ENCODE measurements at regions of chr17 and their contacts with region 1.

Region 1: DNA sequence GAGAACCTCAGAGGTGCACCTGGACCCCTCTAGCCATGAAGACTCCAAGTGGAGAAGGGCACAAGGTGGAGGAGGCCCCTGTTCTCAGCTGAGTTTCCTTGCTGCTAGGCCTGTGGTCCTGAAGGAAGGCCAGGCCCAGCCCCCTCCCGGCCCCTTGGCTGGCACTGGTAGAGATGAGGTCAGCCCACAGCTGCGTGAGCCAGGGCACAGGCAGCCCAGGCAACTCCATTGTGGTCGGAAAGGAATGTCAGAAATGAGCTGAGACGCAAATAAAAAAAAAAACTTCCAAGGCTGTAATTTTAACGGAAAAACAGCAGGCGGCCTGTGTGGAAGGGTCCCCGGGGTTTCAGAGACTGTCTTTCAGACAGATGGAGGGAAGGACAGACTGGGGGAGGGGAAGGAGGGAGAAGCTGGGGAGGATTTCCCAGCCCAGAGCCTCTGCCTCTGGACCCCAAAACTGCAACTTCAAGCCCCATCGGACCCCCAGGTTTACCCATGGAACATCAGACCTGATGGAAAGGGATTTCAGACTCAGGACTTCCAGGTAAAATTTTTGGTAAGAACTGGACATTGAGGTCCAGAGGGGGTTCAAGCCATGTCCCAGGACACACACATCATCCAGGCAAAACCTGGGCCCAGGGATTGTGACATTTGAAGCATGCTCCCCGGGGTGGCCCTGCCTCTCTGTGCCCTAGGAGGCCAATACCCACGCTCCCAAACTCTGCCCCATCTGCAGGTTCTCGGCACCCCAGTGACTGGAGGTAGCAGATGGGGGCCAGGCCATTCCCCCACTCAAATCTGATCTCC is 25.7 kb upstream of the MRPS23 start:
- DNase-seq: peak; percentile 94
- H3K4me3 ChIP-seq: peak overlapping the region; percentile 11
- H3K27ac ChIP-seq: peak overlapping the region; percentile 95
- H3K4me1 ChIP-seq: peaks cover 70% of the 10 kb centered on the region
- H3K27me3 ChIP-seq: no peaks in the 10 kb centered on the region
- CTCF ChIP-seq: peak; percentile 44

Region 2: GRCh38 chr17:57892146-57892828 is 16.8 kb after region 1 on chr17:
- CTCF ChIA-PET with region 1: interaction called, 9 read pairs
- POLR2A ChIA-PET with region 1: no interaction called
- intact Hi-C with region 1: loop called (anchors 1 kb)
- DNase-seq: peak; percentile 90
- H3K4me3 ChIP-seq: no peak overlapping the region
- H3K27ac ChIP-seq: no peak overlapping the region
- H3K4me1 ChIP-seq: peaks cover 32% of the 10 kb centered on the region
- H3K27me3 ChIP-seq: no peaks in the 10 kb centered on the region
- CTCF ChIP-seq: peak; percentile 98

Region 3: DNA sequence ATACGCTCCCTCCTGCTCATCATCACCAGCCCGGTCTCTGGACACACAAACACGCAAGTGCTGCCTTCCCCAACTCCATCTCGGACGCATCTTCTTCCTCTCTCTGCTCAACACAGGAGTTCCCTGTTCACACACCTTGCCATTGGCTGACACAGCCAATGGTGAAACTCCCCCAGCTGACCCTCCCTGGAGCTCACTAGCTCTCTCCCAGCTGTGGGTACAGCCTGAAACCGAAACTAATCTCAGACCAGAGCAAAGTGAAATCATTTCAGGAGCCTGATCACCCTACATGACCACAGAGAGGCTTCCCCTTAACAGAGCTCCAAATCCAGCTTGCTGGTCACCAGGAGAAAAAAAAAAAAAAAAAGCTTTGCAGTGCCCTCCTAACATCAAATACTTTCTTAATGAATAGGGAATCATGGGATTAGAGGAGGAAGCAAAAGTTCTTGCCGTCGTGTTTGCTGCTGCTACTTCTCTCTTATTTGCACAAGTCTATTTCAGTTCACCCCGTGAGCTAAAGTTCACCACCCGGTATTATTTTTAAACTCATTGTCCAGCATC is 71.4 kb after region 1 on chr17:
- CTCF ChIA-PET with region 1: interaction called, 10 read pairs
- POLR2A ChIA-PET with region 1: no interaction called
- intact Hi-C with region 1: no loop called
- DNase-seq: no peak
- H3K4me3 ChIP-seq: peak overlapping the region; percentile 5
- H3K27ac ChIP-seq: peak overlapping the region; percentile 55
- H3K4me1 ChIP-seq: peaks cover 86% of the 10 kb centered on the region
- H3K27me3 ChIP-seq: no peaks in the 10 kb centered on the region
- CTCF ChIP-seq: no peak

Region 4: DNA sequence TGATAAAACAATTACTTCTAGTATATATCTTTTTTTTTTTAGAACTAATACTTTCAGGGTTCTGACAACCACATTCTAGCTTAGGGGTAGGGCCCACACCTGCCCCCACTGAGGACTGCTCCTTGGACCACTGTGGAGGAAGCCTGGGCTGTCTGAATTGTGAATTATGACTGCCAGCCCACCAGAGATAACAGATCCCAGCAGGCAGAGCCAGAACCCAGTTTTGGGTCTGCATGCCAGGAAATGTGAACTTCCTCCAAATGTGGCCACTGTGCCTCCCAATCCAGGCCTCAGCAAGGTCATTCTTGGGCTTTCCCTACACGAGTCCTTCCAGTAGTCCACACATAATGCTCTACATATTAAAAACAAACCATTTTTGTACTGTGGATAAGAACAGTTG is 96.6 kb after region 1 on chr17:
- CTCF ChIA-PET with region 1: no interaction called
- POLR2A ChIA-PET with region 1: interaction called, 12 read pairs
- intact Hi-C with region 1: no loop called
- DNase-seq: no peak
- H3K4me3 ChIP-seq: no peak overlapping the region
- H3K27ac ChIP-seq: no peak overlapping the region
- H3K4me1 ChIP-seq: peaks cover 21% of the 10 kb centered on the region
- H3K27me3 ChIP-seq: no peaks in the 10 kb centered on the region
- CTCF ChIP-seq: no peak

Region 5: DNA sequence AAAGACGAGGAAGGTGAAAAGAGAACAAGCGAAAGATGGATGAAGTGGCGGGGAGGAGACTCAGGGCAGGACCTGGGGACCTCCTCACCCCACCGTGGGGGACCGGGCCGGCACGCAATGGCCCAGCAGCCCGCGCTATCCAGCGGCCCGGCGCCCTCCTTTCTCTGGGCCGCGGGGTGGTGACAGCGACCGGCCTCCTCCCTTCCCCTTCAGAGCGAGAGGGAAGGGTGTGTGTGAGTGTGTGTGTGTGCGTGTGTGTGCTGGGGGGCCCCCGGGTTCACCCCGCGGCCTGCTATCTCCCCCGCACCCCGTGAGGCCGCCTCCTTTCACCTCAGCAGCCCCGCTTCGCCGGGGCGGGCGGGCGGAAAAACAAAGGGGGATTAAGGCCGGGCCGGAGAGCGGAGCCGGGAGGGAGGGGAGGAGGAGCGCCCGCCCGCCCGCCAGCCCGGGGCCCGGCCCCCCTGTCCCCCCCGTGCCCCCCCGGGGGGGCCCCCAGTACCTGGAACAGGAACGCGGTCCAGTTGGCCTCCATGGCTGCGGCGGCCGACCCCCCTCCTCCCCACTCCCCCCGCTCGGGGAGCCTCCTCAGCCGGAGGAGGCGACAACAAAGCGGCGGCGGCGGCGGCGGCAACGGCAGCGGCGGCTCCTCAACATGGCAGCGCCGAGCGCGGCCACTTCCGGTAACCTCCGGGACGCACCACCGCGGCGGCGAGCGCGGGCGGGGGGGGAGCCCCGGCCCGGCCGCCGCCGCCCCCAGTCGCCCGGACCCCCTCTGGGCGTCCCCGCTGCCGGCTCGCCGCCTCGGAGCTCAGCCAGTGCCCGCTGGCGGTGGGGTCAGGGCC is 112.3 kb after region 1 on chr17 and contains the start of gene VEZF1:
- CTCF ChIA-PET with region 1: interaction called, 12 read pairs
- POLR2A ChIA-PET with region 1: interaction called, 7 read pairs
- intact Hi-C with region 1: no loop called
- DNase-seq: peak; percentile 88
- H3K4me3 ChIP-seq: peak within 1 kb of the TSS; percentile 87
- H3K27ac ChIP-seq: peak within 1 kb of the TSS; percentile 93
- H3K4me1 ChIP-seq: peaks cover 47% of the 10 kb centered on the region
- H3K27me3 ChIP-seq: no peaks in the 10 kb centered on the region
- CTCF ChIP-seq: no peak
- total RNA-seq, gene VEZF1: 75.7 and 77.7 TPM in 2 replicates

Region 6: GRCh38 chr17:57995076-57995956 is 119.8 kb after region 1 on chr17:
- CTCF ChIA-PET with region 1: interaction called, 10 read pairs
- POLR2A ChIA-PET with region 1: interaction called, 5 read pairs
- intact Hi-C with region 1: no loop called
- DNase-seq: peak; percentile 88
- H3K4me3 ChIP-seq: no peak overlapping the region
- H3K27ac ChIP-seq: peak overlapping the region; percentile 7
- H3K4me1 ChIP-seq: peaks cover 15% of the 10 kb centered on the region
- H3K27me3 ChIP-seq: no peaks in the 10 kb centered on the region
- CTCF ChIP-seq: peak; percentile 62

Measured in A673 (cell line).